Sigmoid colon (tissue), 7 donors: ENCODE measurements at regions of chr9 and their contacts with region 1.

Region 1: GRCh38 chr9:129413537-129414376 is 207.1 kb downstream of the C9orf50 start:
- DNase-seq: peak; percentile 99
- H3K4me3 ChIP-seq: peak overlapping the region; percentile 49 to 63 (median 57)
- H3K27ac ChIP-seq: peak overlapping the region; percentile 94 to 100 (median 98)
- H3K4me1 ChIP-seq: peaks cover 0 to 38% (median 32%) of the 10 kb centered on the region in 4 donors
- H3K27me3 ChIP-seq: no peaks in the 10 kb centered on the region
- CTCF ChIP-seq: no peak
- EP300 ChIP-seq: peak in 2 of 4 donors; percentile 41 to 91
- POLR2A ChIP-seq: peak; percentile 74 to 81

Region 2: DNA sequence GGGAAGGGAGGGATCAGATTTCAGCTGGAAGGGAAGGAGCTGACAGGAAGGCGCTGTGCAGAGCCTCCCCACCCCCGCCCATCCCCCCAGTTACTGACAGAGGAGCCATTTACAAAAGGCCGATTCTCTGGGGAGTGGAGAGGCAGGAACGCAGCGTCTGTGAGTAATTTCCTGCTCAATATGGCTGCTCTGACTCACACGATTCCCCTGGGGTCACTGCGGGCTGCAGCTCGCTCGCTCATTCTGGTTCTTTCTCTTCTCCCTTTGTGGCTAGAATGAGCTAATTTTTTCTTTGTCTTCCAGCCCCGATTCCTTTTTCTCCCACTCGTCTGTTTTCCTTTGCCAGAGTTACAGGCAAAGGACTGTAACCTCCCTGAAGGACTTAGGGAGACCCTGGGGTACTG is 273.8 kb before region 1 on chr9:
- intact Hi-C with region 1: loop called (anchors 2 kb)
- DNase-seq: peak; percentile 98
- H3K4me3 ChIP-seq: peak overlapping the region; percentile 36 to 59 (median 50)
- H3K27ac ChIP-seq: peak overlapping the region; percentile 97 to 100 (median 99)
- H3K4me1 ChIP-seq: peaks cover 0 to 73% (median 64%) of the 10 kb centered on the region in 4 donors
- H3K27me3 ChIP-seq: no peaks in the 10 kb centered on the region
- CTCF ChIP-seq: no peak
- EP300 ChIP-seq: peak in 2 of 4 donors; percentile 71 to 76
- POLR2A ChIP-seq: peak; percentile 55 to 62

Region 3: DNA sequence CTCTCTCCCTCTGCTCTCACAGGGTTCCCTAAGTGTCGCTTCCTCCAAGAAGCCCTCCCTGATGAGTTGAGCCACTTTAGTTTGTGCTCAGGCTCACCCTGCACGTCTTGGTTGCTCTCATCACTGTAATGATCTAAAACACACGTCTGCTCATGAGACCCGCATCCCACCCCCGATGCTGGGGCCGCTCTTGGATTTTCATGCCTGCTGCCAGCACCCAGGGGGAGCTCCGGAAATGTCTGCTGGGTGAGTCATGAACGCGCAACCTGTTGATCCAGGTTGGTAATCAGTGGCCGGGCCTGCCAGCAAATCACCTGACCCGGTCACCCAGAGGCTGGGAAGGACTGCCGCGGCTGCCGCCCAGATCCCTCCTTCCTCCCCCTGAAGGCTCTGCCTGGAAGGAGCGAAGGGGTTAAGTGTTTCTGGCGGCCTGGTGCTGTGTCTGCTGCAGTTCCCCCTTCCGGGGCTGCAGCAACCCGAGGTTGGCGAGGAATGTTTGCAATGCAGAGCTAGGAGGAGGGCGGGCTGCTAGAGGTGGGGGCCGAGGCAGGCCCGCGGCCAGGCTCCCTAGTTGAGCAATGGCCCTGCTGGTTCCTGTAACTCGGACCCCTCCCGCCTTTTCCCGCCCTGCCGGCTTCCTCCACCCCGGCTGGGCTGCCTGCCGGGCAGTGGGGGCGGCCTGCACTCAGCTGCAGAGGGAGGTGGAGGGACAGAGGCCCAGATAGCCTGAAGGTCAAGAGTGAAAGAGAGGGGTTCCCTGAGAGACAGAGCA is 79.6 kb before region 1 on chr9:
- intact Hi-C with region 1: loop called (anchors 5 kb)
- DNase-seq: peak; percentile 96
- H3K4me3 ChIP-seq: peak overlapping the region in 3 of 4 donors; percentile 20 to 29 (median 23)
- H3K27ac ChIP-seq: peak overlapping the region; percentile 84 to 89 (median 87)
- H3K4me1 ChIP-seq: peaks cover 0 to 51% (median 40%) of the 10 kb centered on the region in 4 donors
- H3K27me3 ChIP-seq: no peaks in the 10 kb centered on the region
- CTCF ChIP-seq: no peak
- EP300 ChIP-seq: peak in 3 of 4 donors; percentile 5 to 65 (median 15)
- POLR2A ChIP-seq: no peak

Region 4: DNA sequence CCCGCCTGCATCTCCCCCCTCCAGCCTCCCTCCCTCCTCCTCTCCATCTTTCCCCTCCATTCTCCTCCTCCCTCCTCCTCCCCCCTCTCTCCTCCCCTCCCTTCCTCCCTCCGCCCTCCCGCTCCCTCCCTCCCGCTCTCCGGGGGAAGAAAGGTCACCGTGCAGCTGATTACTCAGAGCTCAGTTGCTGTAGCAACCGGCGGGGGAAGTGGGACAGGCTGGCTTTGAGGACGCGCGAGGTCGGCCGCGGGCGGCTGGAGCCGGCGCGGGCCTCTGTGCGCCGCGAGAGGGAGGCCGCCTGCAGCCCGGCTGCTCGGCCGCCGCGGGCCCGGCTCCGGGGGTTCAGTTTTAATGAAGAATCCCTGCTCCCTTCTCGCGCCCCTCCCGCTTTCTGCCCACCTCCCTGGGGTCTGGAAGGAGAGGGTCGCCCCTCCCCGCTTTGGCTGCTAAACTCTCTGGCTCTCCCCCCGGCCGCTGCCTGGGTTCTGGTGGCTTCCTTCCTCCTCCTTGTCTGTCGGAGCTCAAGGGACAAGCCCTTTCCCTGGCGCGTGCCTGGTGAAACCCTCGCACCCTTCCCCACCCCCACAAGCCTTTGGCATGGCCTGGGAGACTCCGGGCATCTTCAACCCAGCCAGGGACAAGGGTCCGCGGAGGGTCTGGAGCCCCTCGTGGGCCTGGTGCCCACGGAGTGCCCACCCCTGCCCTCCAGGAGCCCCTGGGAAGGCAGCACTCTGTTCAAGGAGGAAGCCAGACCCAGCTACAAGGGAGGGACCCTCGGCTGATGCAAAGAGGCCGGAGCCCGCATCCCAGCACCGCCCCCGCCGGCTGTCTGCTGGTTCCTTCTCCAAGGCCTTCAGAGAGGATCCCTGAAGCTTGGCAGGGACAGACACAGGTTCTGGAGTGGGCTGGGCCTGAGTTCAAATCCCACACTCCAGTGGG is 46.8 kb after region 1 on chr9:
- intact Hi-C with region 1: loop called (anchors 2 kb)
- DNase-seq: peak; percentile 99
- H3K4me3 ChIP-seq: peak overlapping the region; percentile 19 to 46 (median 46)
- H3K27ac ChIP-seq: peak overlapping the region; percentile 95 to 100 (median 98)
- H3K4me1 ChIP-seq: peaks cover 0 to 68% (median 54%) of the 10 kb centered on the region in 4 donors
- H3K27me3 ChIP-seq: no peaks in the 10 kb centered on the region
- CTCF ChIP-seq: peak in 1 of 4 experiments; percentile 23
- EP300 ChIP-seq: peak in 2 of 4 donors; percentile 53 to 72
- POLR2A ChIP-seq: peak in 1 of 2 donors; percentile 42

Region 5: DNA sequence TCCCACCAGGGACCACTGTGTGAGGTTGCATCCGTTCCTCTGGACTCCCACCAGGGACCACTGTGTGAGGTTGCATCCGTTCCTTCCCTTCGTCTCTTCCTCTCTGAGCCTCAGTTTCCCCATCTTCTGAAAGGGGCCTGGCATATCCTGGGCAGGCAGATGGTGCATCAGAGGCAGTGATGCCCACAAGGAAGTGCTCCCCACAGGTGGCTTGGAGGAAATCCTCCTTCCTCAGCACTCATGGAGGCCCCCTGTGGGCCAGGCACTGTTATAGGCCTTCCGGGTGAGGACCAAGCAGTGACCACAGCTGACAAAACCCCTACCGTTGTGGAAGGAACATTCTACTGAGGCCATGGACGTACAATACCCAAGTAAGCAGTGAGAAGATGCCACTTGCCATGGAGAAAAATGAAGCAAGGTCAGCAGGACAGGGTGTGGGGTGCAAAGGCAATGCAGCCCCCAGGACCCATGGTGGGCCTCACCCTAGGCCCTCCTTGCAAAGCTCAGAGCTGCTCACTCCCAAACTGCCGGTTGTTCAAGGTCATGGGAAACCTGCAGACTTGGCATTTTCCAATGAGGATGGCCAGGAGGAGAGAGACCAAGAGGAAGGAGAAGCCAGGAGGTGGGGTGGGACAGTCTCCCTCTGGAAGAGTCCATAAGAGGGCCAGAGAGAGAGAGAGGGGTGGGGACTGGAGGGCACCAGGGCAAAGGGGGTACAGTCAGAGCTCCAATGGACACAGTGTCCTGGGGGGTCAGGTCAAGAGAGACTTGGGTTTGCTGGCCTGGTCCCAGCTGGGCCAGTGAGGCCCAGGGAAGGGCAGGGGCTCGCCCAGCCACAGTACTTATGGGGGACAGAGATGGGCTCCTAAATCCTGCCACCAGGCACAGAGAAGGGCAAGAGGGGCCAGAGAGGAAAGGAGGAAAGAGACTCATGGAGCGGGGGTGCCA is 156.0 kb after region 1 on chr9:
- intact Hi-C with region 1: loop called (anchors 5 kb)
- DNase-seq: no peak
- H3K4me3 ChIP-seq: peak overlapping the region in 3 of 4 donors; percentile 58 to 74 (median 68)
- H3K27ac ChIP-seq: peak overlapping the region; percentile 76 to 87 (median 81)
- H3K4me1 ChIP-seq: peaks cover 0 to 40% (median 35%) of the 10 kb centered on the region in 4 donors
- H3K27me3 ChIP-seq: no peaks in the 10 kb centered on the region
- CTCF ChIP-seq: peak in 3 of 4 experiments; percentile 22 to 41 (median 28)
- EP300 ChIP-seq: no peak
- POLR2A ChIP-seq: no peak

Region 6: GRCh38 chr9:129602598-129603415 is 189.1 kb after region 1 on chr9:
- intact Hi-C with region 1: no loop called
- DNase-seq: no peak
- H3K4me3 ChIP-seq: no peak overlapping the region
- H3K27ac ChIP-seq: no peak overlapping the region
- H3K4me1 ChIP-seq: peaks cover 0 to 20% (median 10%) of the 10 kb centered on the region in 4 donors
- H3K27me3 ChIP-seq: no peaks in the 10 kb centered on the region
- CTCF ChIP-seq: no peak
- EP300 ChIP-seq: no peak
- POLR2A ChIP-seq: no peak